GM12878 (cell line): ENCODE measurements at regions of chr5 and their contacts with region 1.

Region 1: DNA sequence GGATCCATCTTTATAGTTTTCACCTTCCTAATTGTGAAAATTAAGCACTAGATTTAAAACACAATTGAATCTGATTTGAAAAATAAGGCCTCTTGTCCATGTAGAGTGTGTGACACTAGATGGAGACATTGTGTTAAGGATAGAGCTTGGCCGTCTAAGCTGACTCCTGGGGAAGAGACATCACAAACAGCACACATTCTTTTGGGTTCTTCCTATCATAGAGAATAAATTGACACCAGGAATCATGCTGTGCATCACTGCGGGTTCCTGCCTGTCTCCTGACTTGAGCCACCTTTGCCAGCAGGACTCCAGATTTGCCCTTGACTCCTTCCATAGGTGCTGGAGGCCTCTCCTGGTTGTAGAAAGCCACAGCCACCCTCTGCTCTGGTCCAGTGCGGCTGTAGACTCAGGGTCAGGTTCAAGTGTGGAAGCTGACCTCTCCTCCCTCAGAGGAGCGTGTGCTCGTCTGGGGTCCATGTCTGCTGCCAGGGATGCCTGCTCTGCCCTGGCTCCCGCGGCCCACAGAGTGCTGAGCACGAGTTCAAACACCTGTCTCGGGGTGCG is 11.2 kb downstream of the ROPN1L start:
- DNase-seq: peak; percentile 62
- ATAC-seq: peak; percentile 94
- H3K4me3 ChIP-seq: no peak overlapping the region
- H3K27ac ChIP-seq: no peak overlapping the region
- H3K4me1 ChIP-seq: no peaks in the 10 kb centered on the region
- H3K27me3 ChIP-seq: no peaks in the 10 kb centered on the region; a peak in 1 of 4 replicates
- CTCF ChIP-seq: peak; percentile 70 to 89 (median 81)
- EP300 ChIP-seq: no peak
- POLR2A ChIP-seq: no peak
- RAD21 ChIP-seq: peak; percentile 100

Region 2: GRCh38 chr5:10441083-10441991 is 11.5 kb before region 1 on chr5 and contains the start of gene ROPN1L:
- CTCF ChIA-PET with region 1: interaction called, 27 read pairs
- POLR2A ChIA-PET with region 1: interaction called, 3 read pairs
- RAD21 ChIA-PET with region 1: interaction called, 6 read pairs
- SMC1A ChIA-PET with region 1: interaction called, 4 read pairs
- in situ Hi-C with region 1: no loop called
- intact Hi-C with region 1: no loop called
- DNase-seq: peak; percentile 49
- ATAC-seq: peak; percentile 98
- H3K4me3 ChIP-seq: peak within 1 kb of the TSS; percentile 64
- H3K27ac ChIP-seq: no peak within 1 kb of the TSS
- H3K4me1 ChIP-seq: peaks cover 10% of the 10 kb centered on the region
- H3K27me3 ChIP-seq: peaks cover 0 to 6% of the 10 kb centered on the region in 2 experiments; a peak in 2 of 4 replicates
- CTCF ChIP-seq: no peak
- EP300 ChIP-seq: no peak
- POLR2A ChIP-seq: peak; percentile 58; the same call in 1 of the 2 replicates
- RAD21 ChIP-seq: no peak
- polyA plus RNA-seq, gene ROPN1L: not detected

Region 3: GRCh38 chr5:10577371-10578292 is 124.8 kb after region 1 on chr5:
- CTCF ChIA-PET with region 1: interaction called, 44 read pairs
- POLR2A ChIA-PET with region 1: no interaction called
- RAD21 ChIA-PET with region 1: interaction called, 14 read pairs
- SMC1A ChIA-PET with region 1: interaction called, 23 read pairs
- in situ Hi-C with region 1: no loop called
- intact Hi-C with region 1: no loop called
- DNase-seq: no peak
- ATAC-seq: peak; percentile 68
- H3K4me3 ChIP-seq: peak overlapping the region; percentile 46; the same call in 1 of the 2 replicates
- H3K27ac ChIP-seq: peak overlapping the region; percentile 77
- H3K4me1 ChIP-seq: peaks cover 64% of the 10 kb centered on the region
- H3K27me3 ChIP-seq: no peaks in the 10 kb centered on the region
- CTCF ChIP-seq: no peak
- EP300 ChIP-seq: no peak
- POLR2A ChIP-seq: no peak; the same call in 1 of the 2 replicates
- RAD21 ChIP-seq: no peak

Region 4: DNA sequence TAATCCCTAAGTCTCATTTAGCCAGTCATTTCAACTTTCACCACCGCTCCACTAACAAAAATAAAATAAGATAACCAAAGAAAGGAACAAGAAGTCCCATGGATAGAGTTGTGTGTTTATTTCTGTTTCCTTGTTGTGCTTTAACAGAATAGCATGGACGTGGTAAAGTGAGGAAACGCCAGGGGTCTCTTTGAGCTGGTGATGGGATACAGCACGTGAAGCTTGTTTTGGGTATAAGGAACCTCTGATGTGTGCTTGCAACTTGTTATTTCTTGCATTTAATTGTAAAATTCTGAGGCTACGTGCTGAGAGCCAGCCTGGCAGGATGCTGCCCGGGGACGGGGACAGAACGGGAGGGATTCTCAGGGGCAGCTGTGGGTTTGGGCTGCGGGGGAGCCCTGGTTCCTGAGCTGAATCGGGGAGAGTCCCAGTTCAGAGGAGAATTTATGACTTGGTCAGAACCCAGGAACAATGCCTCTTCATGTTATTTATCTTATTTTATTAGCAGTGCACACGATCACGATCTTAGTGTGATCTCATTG is 174.4 kb after region 1 on chr5:
- CTCF ChIA-PET with region 1: interaction called, 229 read pairs
- POLR2A ChIA-PET with region 1: interaction called, 18 read pairs
- RAD21 ChIA-PET with region 1: interaction called, 186 read pairs
- SMC1A ChIA-PET with region 1: interaction called, 168 read pairs
- in situ Hi-C with region 1: loop called (anchors 5 kb)
- intact Hi-C with region 1: loop called (anchors 1 kb)
- DNase-seq: no peak
- ATAC-seq: peak; percentile 12
- H3K4me3 ChIP-seq: peak overlapping the region; percentile 29
- H3K27ac ChIP-seq: peak overlapping the region; percentile 64
- H3K4me1 ChIP-seq: peaks cover 62% of the 10 kb centered on the region
- H3K27me3 ChIP-seq: no peaks in the 10 kb centered on the region
- CTCF ChIP-seq: no peak
- EP300 ChIP-seq: no peak
- POLR2A ChIP-seq: no peak
- RAD21 ChIP-seq: no peak

Region 5: GRCh38 chr5:10695055-10695649 is 242.3 kb after region 1 on chr5:
- CTCF ChIA-PET with region 1: interaction called, 111 read pairs
- POLR2A ChIA-PET with region 1: interaction called, 3 read pairs
- RAD21 ChIA-PET with region 1: interaction called, 44 read pairs
- SMC1A ChIA-PET with region 1: interaction called, 35 read pairs
- in situ Hi-C with region 1: no loop called
- intact Hi-C with region 1: no loop called
- DNase-seq: no peak
- ATAC-seq: peak; percentile 63
- H3K4me3 ChIP-seq: no peak overlapping the region
- H3K27ac ChIP-seq: no peak overlapping the region
- H3K4me1 ChIP-seq: peaks cover 19% of the 10 kb centered on the region
- H3K27me3 ChIP-seq: no peaks in the 10 kb centered on the region
- CTCF ChIP-seq: peak; percentile 50 to 81 (median 54); a peak in 5 of 6 replicates
- EP300 ChIP-seq: no peak
- POLR2A ChIP-seq: no peak
- RAD21 ChIP-seq: peak; percentile 71

Region 6: DNA sequence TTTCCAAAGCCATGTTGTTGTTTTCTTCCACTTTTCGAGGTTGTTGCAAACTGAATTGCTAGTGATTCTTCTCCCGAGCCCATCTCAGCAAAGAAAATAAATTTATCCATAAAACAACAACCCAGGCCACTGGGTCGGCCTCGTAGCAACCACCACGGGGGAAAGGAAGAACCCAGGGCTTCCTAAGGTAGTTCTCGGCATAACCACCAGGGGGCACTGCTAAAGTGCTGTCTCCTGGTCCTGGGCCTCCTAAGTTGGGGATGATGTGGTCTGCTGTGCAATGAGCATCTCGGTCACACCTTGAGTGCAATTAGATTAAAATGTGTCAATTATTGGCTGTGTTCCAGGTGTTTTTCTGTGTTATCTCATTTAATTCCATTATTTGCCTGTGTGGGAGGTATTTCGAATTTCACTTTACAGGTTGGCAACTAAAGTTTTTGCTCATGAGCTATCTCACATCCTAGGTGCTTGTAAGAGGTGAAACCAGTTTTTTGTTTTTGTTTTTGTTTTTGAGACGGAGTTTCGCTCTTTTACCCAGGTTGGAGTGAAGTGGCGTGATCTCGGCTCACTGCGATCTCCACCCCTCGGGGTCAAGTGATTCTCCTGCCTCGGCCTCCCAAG is 411.0 kb after region 1 on chr5:
- CTCF ChIA-PET with region 1: interaction called, 4 read pairs
- POLR2A ChIA-PET with region 1: no interaction called
- RAD21 ChIA-PET with region 1: no interaction called
- SMC1A ChIA-PET with region 1: no interaction called
- in situ Hi-C with region 1: no loop called
- intact Hi-C with region 1: loop called (anchors 5 kb)
- DNase-seq: peak; percentile 8
- ATAC-seq: peak; percentile 98
- H3K4me3 ChIP-seq: no peak overlapping the region
- H3K27ac ChIP-seq: no peak overlapping the region
- H3K4me1 ChIP-seq: no peaks in the 10 kb centered on the region
- H3K27me3 ChIP-seq: peaks cover under 1 to 1% of the 10 kb centered on the region in 2 experiments; a peak in 1 of 4 replicates
- CTCF ChIP-seq: peak; percentile 75 to 93 (median 91)
- EP300 ChIP-seq: no peak
- POLR2A ChIP-seq: no peak
- RAD21 ChIP-seq: peak; percentile 66

Region 7: GRCh38 chr5:11182441-11183268 is 729.8 kb after region 1 on chr5:
- CTCF ChIA-PET with region 1: interaction called, 3 read pairs
- POLR2A ChIA-PET with region 1: no interaction called
- RAD21 ChIA-PET with region 1: no interaction called
- SMC1A ChIA-PET with region 1: no interaction called
- in situ Hi-C with region 1: loop called (anchors 25 kb)
- intact Hi-C with region 1: loop called (anchors 10 kb)
- DNase-seq: no peak
- ATAC-seq: peak; percentile 54
- H3K4me3 ChIP-seq: no peak overlapping the region
- H3K27ac ChIP-seq: no peak overlapping the region
- H3K4me1 ChIP-seq: no peaks in the 10 kb centered on the region
- H3K27me3 ChIP-seq: no peaks in the 10 kb centered on the region
- CTCF ChIP-seq: peak; percentile 30 to 49 (median 38); a peak in 4 of 6 replicates
- EP300 ChIP-seq: no peak
- POLR2A ChIP-seq: no peak
- RAD21 ChIP-seq: peak; percentile 55